CD8-positive, alpha-beta T cell (primary cell): ENCODE measurements at regions of chr20 and their contacts with region 1.

Region 1: DNA sequence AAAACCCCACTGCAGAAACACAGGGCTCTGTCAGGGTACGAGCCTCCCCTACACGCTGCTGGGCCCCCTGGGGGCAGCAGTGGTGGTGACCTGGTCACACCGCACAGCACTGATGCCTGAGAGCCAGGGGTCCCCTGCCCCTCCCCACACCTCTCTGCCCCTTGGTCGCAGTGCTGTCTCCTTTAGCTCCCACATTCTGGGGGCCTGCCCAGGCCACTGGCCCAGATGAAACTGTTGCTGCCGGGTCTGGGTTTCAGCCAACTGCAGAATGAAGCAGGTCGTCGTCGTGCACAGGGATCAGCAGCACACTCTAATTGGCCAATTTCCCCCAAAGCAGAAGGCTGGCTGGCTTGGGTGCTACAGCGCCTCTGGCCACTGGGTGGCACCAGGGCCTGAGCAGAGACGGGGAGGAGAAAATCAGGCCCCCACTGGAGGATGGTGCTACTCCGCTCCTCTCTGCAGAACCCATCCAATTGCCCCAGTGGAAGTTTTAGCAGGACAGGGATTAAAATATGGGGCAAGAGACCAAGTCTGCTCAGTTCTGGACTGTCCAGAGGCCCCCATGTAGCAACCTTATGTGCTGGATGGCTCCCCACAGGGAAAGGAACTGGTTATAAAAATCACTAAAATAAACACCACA is 26.1 kb downstream of the DIDO1 start:
- DNase-seq: peak; percentile 62 to 88 (median 81)
- ATAC-seq: peak; percentile 93
- H3K4me3 ChIP-seq: no peak overlapping the region
- H3K4me3 Mint-ChIP-seq: peak overlapping the region; percentile 29
- H3K27ac ChIP-seq: peak overlapping the region; percentile 17 to 33
- H3K27ac Mint-ChIP-seq: peak overlapping the region; percentile 90
- H3K4me1 ChIP-seq: peaks cover 23% of the 10 kb centered on the region
- H3K4me1 Mint-ChIP-seq: peaks cover 30% of the 10 kb centered on the region
- H3K27me3 ChIP-seq: no peaks in the 10 kb centered on the region
- H3K27me3 Mint-ChIP-seq: no peaks in the 10 kb centered on the region
- CTCF ChIP-seq: peak; percentile 93

Region 2: GRCh38 chr20:62668441-62669027 is 231.6 kb before region 1 on chr20:
- CTCF ChIA-PET with region 1: no interaction called
- POLR2A ChIA-PET with region 1: no interaction called
- intact Hi-C with region 1: loop called in 1 of 2 experiments (anchors 5 kb)
- DNase-seq: peak in 7 of 9 experiments; percentile 11 to 67 (median 49)
- ATAC-seq: peak; percentile 53
- H3K4me3 ChIP-seq: no peak overlapping the region
- H3K4me3 Mint-ChIP-seq: no peak overlapping the region
- H3K27ac ChIP-seq: no peak overlapping the region
- H3K27ac Mint-ChIP-seq: no peak overlapping the region
- H3K4me1 ChIP-seq: no peaks in the 10 kb centered on the region
- H3K4me1 Mint-ChIP-seq: no peaks in the 10 kb centered on the region
- H3K27me3 ChIP-seq: no peaks in the 10 kb centered on the region
- H3K27me3 Mint-ChIP-seq: no peaks in the 10 kb centered on the region
- CTCF ChIP-seq: peak; percentile 52

Region 3: DNA sequence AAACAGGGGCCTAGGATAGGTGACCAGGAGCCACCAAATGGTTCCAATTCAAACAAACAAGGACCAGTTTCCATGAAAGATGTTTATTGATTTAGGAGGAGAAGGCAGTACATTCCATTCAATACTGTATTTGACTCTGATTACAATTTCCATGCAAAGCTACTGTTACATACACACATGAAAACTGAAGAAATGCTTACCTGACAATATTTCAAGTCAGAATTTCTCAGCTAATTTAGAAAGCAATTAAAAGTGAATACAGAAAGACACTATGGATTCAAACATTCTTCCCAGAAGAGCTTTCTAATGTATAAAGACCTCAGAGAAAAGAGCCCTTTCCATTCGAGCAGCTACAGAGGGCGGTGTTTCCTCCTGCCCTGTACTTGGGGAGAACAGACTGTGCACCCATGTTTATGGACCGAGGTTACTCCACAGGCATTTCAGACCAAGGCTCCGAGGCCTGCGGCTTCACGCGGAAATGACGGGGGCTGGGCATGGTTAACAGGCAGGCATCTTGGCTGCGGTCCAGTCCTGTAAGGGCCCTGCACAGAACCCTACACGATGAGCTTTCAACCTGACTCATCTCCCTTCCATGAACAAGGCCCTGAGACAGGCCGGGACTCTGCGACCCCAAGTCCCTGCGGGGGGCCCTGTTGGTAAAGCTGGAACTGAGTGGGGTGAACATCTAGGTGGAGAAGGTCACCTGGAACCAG is 12.9 kb before region 1 on chr20:
- CTCF ChIA-PET with region 1: interaction called, 23 read pairs
- POLR2A ChIA-PET with region 1: interaction called, 4 read pairs
- intact Hi-C with region 1: no loop called
- DNase-seq: peak in 7 of 9 experiments; percentile 23 to 70 (median 51)
- ATAC-seq: peak; percentile 48
- H3K4me3 ChIP-seq: no peak overlapping the region
- H3K4me3 Mint-ChIP-seq: no peak overlapping the region
- H3K27ac ChIP-seq: no peak overlapping the region
- H3K27ac Mint-ChIP-seq: peak overlapping the region; percentile 32
- H3K4me1 ChIP-seq: peaks cover 28% of the 10 kb centered on the region
- H3K4me1 Mint-ChIP-seq: peaks cover 23% of the 10 kb centered on the region
- H3K27me3 ChIP-seq: no peaks in the 10 kb centered on the region
- H3K27me3 Mint-ChIP-seq: no peaks in the 10 kb centered on the region
- CTCF ChIP-seq: no peak

Region 4: GRCh38 chr20:62921119-62921687 is 21.0 kb after region 1 on chr20:
- CTCF ChIA-PET with region 1: interaction called, 157 read pairs
- POLR2A ChIA-PET with region 1: interaction called, 15 read pairs
- intact Hi-C with region 1: loop called (anchors 1 to 2 kb)
- DNase-seq: peak; percentile 20 to 85 (median 65)
- ATAC-seq: peak; percentile 66
- H3K4me3 ChIP-seq: peak overlapping the region in 1 of 2 experiments; percentile 18
- H3K4me3 Mint-ChIP-seq: peak overlapping the region; percentile 83
- H3K27ac ChIP-seq: peak overlapping the region in 1 of 2 experiments; percentile 62
- H3K27ac Mint-ChIP-seq: peak overlapping the region; percentile 89
- H3K4me1 ChIP-seq: peaks cover 89% of the 10 kb centered on the region
- H3K4me1 Mint-ChIP-seq: peaks cover 82% of the 10 kb centered on the region
- H3K27me3 ChIP-seq: no peaks in the 10 kb centered on the region
- H3K27me3 Mint-ChIP-seq: no peaks in the 10 kb centered on the region
- CTCF ChIP-seq: peak; percentile 80

Region 5: GRCh38 chr20:62926239-62927104 is 26.3 kb after region 1 on chr20 and contains the start of gene DIDO1:
- CTCF ChIA-PET with region 1: interaction called, 157 read pairs
- POLR2A ChIA-PET with region 1: interaction called, 4 read pairs
- intact Hi-C with region 1: loop called in 1 of 2 experiments (anchors 1 kb)
- DNase-seq: peak; percentile 76 to 95 (median 91)
- ATAC-seq: peak; percentile 76
- H3K4me3 ChIP-seq: peak within 1 kb of the TSS; percentile 70 to 99
- H3K4me3 Mint-ChIP-seq: peak within 1 kb of the TSS; percentile 95
- H3K27ac ChIP-seq: peak within 1 kb of the TSS; percentile 75 to 96
- H3K27ac Mint-ChIP-seq: peak within 1 kb of the TSS; percentile 95
- H3K4me1 ChIP-seq: peaks cover 68% of the 10 kb centered on the region
- H3K4me1 Mint-ChIP-seq: peaks cover 75% of the 10 kb centered on the region
- H3K27me3 ChIP-seq: no peaks in the 10 kb centered on the region
- H3K27me3 Mint-ChIP-seq: no peaks in the 10 kb centered on the region
- CTCF ChIP-seq: peak; percentile 53
- total RNA-seq, gene DIDO1: 44.7 to 46.6 TPM

Region 6: GRCh38 chr20:62972270-62973032 is 72.3 kb after region 1 on chr20:
- CTCF ChIA-PET with region 1: interaction called, 12 read pairs
- POLR2A ChIA-PET with region 1: no interaction called
- intact Hi-C with region 1: loop called (anchors 1 kb)
- DNase-seq: peak; percentile 75 to 88 (median 86)
- ATAC-seq: peak; percentile 99
- H3K4me3 ChIP-seq: peak overlapping the region in 1 of 2 experiments; percentile 36
- H3K4me3 Mint-ChIP-seq: peak overlapping the region; percentile 79
- H3K27ac ChIP-seq: no peak overlapping the region
- H3K27ac Mint-ChIP-seq: peak overlapping the region; percentile 42
- H3K4me1 ChIP-seq: peaks cover 18% of the 10 kb centered on the region
- H3K4me1 Mint-ChIP-seq: peaks cover 23% of the 10 kb centered on the region
- H3K27me3 ChIP-seq: peaks cover 16 to 48% of the 10 kb centered on the region in 2 experiments
- H3K27me3 Mint-ChIP-seq: peaks cover 45% of the 10 kb centered on the region
- CTCF ChIP-seq: peak; percentile 84